PC-9 (cell line): ENCODE measurements at regions of chr5 and their contacts with region 1.

Region 1: GRCh38 chr5:108681079-108681921 is 66.4 kb upstream of the FER start:
- DNase-seq: peak; percentile 33 to 47
- H3K4me3 ChIP-seq: no peak overlapping the region
- H3K27ac ChIP-seq: no peak overlapping the region
- H3K4me1 ChIP-seq: no peaks in the 10 kb centered on the region
- H3K27me3 ChIP-seq: no peaks in the 10 kb centered on the region
- CTCF ChIP-seq: peak; percentile 82

Region 2: DNA sequence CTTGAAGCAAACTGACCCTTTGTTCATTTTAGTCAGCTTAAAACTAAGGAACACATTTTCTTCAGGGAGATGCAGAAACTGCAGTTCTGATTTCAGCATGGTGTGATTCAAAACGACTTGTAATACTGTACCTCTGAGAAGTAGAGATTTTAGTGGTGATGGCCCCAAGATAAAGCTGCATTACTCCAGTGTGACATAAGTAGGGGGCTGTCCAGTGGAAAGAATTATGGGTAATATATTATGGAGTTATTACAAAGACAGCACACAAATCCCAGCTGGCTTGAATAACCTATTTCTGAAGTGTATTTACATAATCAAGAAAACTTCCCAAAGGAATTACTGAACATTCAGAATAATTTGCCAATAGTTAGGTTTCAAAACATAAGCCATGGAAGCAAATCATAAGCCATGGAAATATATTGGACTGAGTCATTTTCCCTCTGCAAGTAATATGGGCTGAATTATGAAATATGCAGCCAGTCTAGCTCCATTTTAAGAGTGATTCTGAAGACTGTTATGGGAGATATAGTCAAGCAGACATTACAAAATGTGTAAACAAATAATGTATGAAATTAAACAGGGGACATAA is 165.7 kb before region 1 on chr5:
- CTCF ChIA-PET with region 1: no interaction called
- POLR2A ChIA-PET with region 1: no interaction called
- intact Hi-C with region 1: no loop called
- DNase-seq: no peak
- H3K4me3 ChIP-seq: no peak overlapping the region
- H3K27ac ChIP-seq: no peak overlapping the region
- H3K4me1 ChIP-seq: no peaks in the 10 kb centered on the region
- H3K27me3 ChIP-seq: no peaks in the 10 kb centered on the region
- CTCF ChIP-seq: no peak

Region 3: DNA sequence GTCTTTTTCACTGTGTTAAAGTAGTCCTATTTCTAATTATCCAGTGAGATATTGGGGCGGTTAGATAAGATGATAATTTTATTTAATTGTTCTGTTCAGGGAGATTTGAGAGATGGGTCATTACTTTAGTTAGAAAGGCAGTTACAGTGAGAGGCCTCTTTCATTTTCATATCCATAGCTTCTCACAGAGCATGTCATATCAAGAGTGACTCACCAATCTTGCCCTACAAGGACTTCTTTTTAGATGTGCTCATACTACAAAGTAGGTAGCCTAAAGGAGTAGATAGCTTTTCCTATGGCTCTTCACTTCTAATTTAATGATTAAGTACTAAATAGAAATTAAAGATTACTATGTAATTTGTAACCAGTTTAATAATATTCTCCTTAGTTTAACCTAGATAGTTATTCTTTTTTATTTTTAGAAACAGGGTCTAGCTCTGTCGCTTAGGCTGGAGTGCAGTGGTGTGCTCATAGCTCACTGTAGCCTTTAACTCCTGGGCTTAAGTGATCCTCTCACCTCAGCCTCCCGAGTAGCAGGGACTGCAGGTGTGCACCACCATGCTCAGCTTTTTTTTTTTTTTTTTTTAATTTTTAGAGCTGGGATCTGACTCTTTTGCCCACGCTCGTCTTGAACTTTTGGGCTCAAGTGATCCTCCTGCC is 137.4 kb after region 1 on chr5:
- CTCF ChIA-PET with region 1: no interaction called
- POLR2A ChIA-PET with region 1: no interaction called
- intact Hi-C with region 1: loop called (anchors 10 kb)
- DNase-seq: no peak
- H3K4me3 ChIP-seq: no peak overlapping the region
- H3K27ac ChIP-seq: no peak overlapping the region
- H3K4me1 ChIP-seq: no peaks in the 10 kb centered on the region
- H3K27me3 ChIP-seq: no peaks in the 10 kb centered on the region
- CTCF ChIP-seq: no peak

Region 4: GRCh38 chr5:108830705-108831276 is 149.5 kb after region 1 on chr5:
- CTCF ChIA-PET with region 1: no interaction called
- POLR2A ChIA-PET with region 1: no interaction called
- intact Hi-C with region 1: no loop called
- DNase-seq: no peak
- H3K4me3 ChIP-seq: no peak overlapping the region
- H3K27ac ChIP-seq: no peak overlapping the region
- H3K4me1 ChIP-seq: no peaks in the 10 kb centered on the region
- H3K27me3 ChIP-seq: no peaks in the 10 kb centered on the region
- CTCF ChIP-seq: no peak

Region 5: GRCh38 chr5:108919591-108920326 is 238.5 kb after region 1 on chr5:
- CTCF ChIA-PET with region 1: no interaction called
- POLR2A ChIA-PET with region 1: no interaction called
- intact Hi-C with region 1: loop called (anchors 5 kb)
- DNase-seq: no peak
- H3K4me3 ChIP-seq: no peak overlapping the region
- H3K27ac ChIP-seq: no peak overlapping the region
- H3K4me1 ChIP-seq: no peaks in the 10 kb centered on the region
- H3K27me3 ChIP-seq: no peaks in the 10 kb centered on the region
- CTCF ChIP-seq: peak; percentile 71

Region 6: GRCh38 chr5:109439590-109439989 is 758.3 kb after region 1 on chr5:
- CTCF ChIA-PET with region 1: no interaction called
- POLR2A ChIA-PET with region 1: no interaction called
- intact Hi-C with region 1: loop called (anchors 10 kb)
- DNase-seq: no peak
- H3K4me3 ChIP-seq: no peak overlapping the region
- H3K27ac ChIP-seq: no peak overlapping the region
- H3K4me1 ChIP-seq: no peaks in the 10 kb centered on the region
- H3K27me3 ChIP-seq: no peaks in the 10 kb centered on the region
- CTCF ChIP-seq: no peak